Activated CD4-positive, alpha-beta T cell treated with anti-CD3 and anti-CD28 coated beads, Interleukin-2, amount 10 ng/mL, durations not matched to agents 7 days and 5 days (primary cell): ENCODE measurements at regions of chr5 and their contacts with region 1.

Region 1: GRCh38 chr5:76345582-76345981 is 57.5 kb upstream of the IQGAP2 start:
- DNase-seq: no peak
- H3K4me3 Mint-ChIP-seq: no peak overlapping the region
- H3K27ac Mint-ChIP-seq: no peak overlapping the region
- H3K4me1 Mint-ChIP-seq: peaks cover 19% of the 10 kb centered on the region
- H3K27me3 Mint-ChIP-seq: no peaks in the 10 kb centered on the region

Region 2: GRCh38 chr5:76451031-76451701 is 105.6 kb after region 1 on chr5:
- CTCF ChIA-PET with region 1: no interaction called
- POLR2A ChIA-PET with region 1: no interaction called
- DNase-seq: no peak
- H3K4me3 Mint-ChIP-seq: no peak overlapping the region
- H3K27ac Mint-ChIP-seq: no peak overlapping the region
- H3K4me1 Mint-ChIP-seq: peaks cover 36% of the 10 kb centered on the region
- H3K27me3 Mint-ChIP-seq: no peaks in the 10 kb centered on the region

Region 3: GRCh38 chr5:76544268-76544926 is 198.8 kb after region 1 on chr5:
- CTCF ChIA-PET with region 1: interaction called, 10 read pairs
- POLR2A ChIA-PET with region 1: no interaction called
- DNase-seq: peak; percentile 73
- H3K4me3 Mint-ChIP-seq: peak overlapping the region; percentile 66
- H3K27ac Mint-ChIP-seq: peak overlapping the region; percentile 95
- H3K4me1 Mint-ChIP-seq: peaks cover 90% of the 10 kb centered on the region
- H3K27me3 Mint-ChIP-seq: no peaks in the 10 kb centered on the region